PC-9 (cell line): ENCODE measurements at regions of chr1 and their contacts with region 1.

Region 1: DNA sequence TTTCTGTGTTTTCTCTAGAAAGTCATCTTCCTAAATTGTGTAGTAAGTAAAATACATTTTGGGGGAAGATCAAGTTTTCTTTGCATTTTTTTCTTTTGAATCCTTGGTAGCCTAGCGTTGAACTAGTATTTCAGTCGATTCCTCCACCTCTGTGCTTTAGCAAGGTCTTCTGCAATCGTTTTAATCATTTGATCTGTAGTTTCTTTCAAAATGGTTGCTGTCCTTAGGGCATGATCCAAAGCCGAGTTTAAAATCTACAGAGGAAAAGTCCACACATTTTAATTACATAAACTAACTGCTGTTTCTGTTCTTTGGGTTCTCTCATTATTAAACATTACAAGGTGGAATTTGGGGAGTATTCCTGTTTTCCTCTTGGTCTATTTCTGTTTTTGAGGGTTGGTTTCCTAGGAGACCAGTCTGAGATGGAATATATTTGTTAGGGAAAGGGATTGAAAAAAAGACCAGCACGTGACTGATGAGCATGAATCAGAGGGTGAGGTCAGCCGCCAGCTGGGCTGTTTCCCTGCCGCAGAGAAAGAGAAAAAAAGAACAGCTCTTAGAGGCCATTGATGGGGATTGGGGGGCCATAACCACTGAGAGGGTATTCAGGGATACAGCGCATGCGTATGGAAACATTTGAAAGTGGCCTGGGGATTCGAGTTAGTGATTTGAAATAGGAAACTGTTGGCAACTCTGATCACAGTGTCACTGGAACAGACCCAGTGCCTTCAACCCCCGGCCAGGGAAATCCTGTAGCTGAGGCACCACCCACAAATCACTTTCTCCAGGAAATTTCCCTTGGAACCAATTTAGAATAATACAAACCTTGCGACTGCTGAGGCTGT is 40.6 kb downstream of the AKNAD1 start:
- DNase-seq: peak; percentile 43 to 71
- H3K4me3 ChIP-seq: peak overlapping the region; percentile 28; the same call in 1 of the 2 replicates
- H3K27ac ChIP-seq: peak overlapping the region; percentile 21; the same call in 1 of the 2 replicates
- H3K4me1 ChIP-seq: peaks cover 48% of the 10 kb centered on the region
- H3K27me3 ChIP-seq: no peaks in the 10 kb centered on the region
- CTCF ChIP-seq: no peak

Region 2: DNA sequence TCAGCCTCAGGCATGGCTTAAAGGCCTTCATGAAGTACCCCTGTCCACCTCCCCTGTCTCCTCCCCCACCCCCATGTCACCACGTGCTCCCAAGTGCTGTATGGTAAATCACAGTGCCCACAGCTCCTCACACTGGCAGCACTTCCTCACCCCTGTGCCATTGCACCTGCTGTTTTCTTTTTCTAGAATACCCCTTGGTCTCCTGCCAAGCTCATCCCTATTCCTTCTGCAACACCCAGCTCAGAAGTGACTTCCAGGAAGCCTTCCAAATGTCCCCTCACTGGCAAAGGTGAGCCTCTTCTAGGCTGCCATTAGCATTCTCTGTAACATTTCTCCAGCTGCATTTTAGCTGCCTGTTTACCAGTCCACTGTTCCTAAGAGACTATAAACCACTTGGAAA is 31.2 kb after region 1 on chr1:
- CTCF ChIA-PET with region 1: interaction called, 26 read pairs
- POLR2A ChIA-PET with region 1: no interaction called
- intact Hi-C with region 1: no loop called
- DNase-seq: no peak
- H3K4me3 ChIP-seq: no peak overlapping the region
- H3K27ac ChIP-seq: no peak overlapping the region
- H3K4me1 ChIP-seq: no peaks in the 10 kb centered on the region
- H3K27me3 ChIP-seq: no peaks in the 10 kb centered on the region
- CTCF ChIP-seq: no peak

Region 3: GRCh38 chr1:109120356-109120755 is 304.1 kb after region 1 on chr1:
- CTCF ChIA-PET with region 1: no interaction called
- POLR2A ChIA-PET with region 1: no interaction called
- intact Hi-C with region 1: no loop called
- DNase-seq: no peak
- H3K4me3 ChIP-seq: no peak overlapping the region
- H3K27ac ChIP-seq: no peak overlapping the region
- H3K4me1 ChIP-seq: no peaks in the 10 kb centered on the region
- H3K27me3 ChIP-seq: no peaks in the 10 kb centered on the region
- CTCF ChIP-seq: no peak

Region 4: GRCh38 chr1:109239580-109240095 is 423.4 kb after region 1 on chr1:
- CTCF ChIA-PET with region 1: interaction called, 13 read pairs
- POLR2A ChIA-PET with region 1: no interaction called
- intact Hi-C with region 1: no loop called
- DNase-seq: peak; percentile 36 to 66
- H3K4me3 ChIP-seq: no peak overlapping the region
- H3K27ac ChIP-seq: peak overlapping the region; percentile 92
- H3K4me1 ChIP-seq: peaks cover 38% of the 10 kb centered on the region
- H3K27me3 ChIP-seq: no peaks in the 10 kb centered on the region
- CTCF ChIP-seq: peak; percentile 80